Activated CD8-positive, alpha-beta T cell treated with anti-CD3 and anti-CD28 coated beads, Interleukin-2, amount 10 ng/mL, durations not matched to agents 7 days and 5 days (primary cell): ENCODE measurements at regions of chr17 and their contacts with region 1.

Region 1: DNA sequence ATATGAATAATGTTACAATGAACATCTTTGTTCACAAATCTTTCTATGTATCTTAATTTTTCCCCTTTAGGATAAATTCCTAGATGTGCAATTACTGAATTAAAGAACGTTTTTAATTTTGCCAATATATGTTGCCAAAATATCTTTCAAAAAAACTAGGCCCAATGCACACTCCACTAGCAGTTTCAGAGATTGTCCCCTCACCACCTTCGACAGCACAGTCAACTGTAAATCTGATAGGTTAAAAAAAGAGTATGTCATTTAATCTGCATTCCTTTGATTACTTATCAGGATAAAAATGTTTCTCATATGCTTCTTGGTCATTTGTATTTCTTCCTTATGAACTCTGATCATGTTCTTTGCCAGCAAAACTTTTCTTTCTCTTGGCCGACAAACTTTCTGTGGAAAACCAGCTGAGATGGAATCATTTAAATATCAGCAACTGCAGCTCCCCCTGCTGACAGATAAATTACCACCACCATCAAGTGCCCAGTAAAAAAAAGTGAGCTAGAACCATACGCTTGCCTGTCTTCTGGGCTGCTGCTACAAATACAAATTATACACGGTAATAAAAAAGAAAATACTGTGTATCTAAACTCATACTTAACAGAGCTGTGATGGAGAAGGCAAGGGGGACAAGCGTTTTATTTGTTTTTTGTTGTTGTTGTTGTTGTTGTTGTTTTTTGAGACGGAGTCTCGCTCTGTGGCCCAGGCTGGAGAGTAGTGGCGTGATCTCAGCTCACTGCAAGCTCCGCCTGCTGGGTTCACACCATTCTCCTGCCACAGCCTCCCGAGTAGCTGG is 19.6 kb upstream of the KANSL1 start:
- DNase-seq: peak; percentile 72
- ATAC-seq: peak; percentile 73
- H3K4me3 Mint-ChIP-seq: no peak overlapping the region
- H3K27ac Mint-ChIP-seq: no peak overlapping the region
- H3K4me1 Mint-ChIP-seq: peaks cover 14% of the 10 kb centered on the region
- H3K27me3 Mint-ChIP-seq: no peaks in the 10 kb centered on the region

Region 2: DNA sequence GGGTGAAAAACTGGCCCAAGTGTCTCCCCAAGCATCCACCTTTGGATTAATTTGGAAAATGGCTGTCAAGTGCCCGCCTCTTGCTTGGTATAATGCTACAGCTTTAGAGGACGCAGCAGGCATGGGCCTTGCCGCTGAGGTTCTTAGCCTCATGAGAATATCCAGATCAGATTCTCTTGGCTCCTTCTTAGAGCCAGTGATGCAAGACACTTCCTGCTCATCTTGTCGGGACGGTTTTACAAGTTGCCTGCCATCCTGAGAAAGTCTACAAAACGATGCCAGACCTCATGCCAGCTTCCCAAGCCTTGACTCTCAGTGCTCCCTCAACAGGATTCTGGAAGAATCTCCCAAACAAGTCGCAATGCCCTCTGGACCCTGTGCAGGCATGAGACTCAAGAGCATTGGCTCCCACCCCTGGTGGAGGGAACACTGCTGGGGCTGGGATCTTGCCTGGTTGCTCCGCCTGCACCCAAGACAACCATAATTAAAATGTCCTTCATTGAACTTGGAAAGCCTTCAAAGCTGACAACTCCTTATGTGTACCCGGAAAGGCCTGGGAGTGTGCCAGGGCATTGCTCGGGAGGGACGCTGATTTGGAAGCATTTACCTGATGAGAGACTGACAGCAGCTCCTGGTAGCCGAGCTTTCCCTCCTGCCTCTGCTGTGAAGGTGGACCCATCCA is 239.6 kb before region 1 on chr17:
- CTCF ChIA-PET with region 1: no interaction called
- POLR2A ChIA-PET with region 1: no interaction called
- DNase-seq: no peak
- ATAC-seq: no peak
- H3K4me3 Mint-ChIP-seq: no peak overlapping the region
- H3K27ac Mint-ChIP-seq: no peak overlapping the region
- H3K4me1 Mint-ChIP-seq: peaks cover 9% of the 10 kb centered on the region
- H3K27me3 Mint-ChIP-seq: peaks cover 5% of the 10 kb centered on the region

Region 3: DNA sequence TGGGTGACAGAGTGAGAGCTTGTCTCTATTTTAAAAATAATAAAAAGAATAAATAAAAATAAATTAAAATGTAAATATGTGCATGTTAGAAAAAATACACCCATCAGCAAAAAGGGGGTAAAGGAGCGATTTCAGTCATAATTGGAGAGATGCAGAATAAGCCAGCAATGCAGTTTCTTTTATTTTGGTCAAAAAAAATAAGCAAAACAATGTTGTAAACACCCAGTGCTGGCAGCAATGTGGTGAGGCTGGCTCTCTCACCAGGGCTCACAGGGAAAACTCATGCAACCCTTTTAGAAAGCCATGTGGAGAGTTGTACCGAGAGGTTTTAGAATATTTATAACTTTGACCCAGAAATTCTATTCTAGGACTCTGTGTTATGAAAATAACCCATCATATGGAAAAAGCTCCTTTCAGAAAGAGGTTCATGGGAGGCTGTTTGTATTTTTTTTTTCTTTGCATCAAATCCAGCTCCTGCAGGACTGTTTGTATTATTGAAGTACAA is 205.3 kb before region 1 on chr17:
- CTCF ChIA-PET with region 1: interaction called, 53 read pairs
- POLR2A ChIA-PET with region 1: no interaction called
- DNase-seq: no peak
- ATAC-seq: no peak
- H3K4me3 Mint-ChIP-seq: no peak overlapping the region
- H3K27ac Mint-ChIP-seq: no peak overlapping the region
- H3K4me1 Mint-ChIP-seq: no peaks in the 10 kb centered on the region
- H3K27me3 Mint-ChIP-seq: peaks cover 7% of the 10 kb centered on the region

Region 4: DNA sequence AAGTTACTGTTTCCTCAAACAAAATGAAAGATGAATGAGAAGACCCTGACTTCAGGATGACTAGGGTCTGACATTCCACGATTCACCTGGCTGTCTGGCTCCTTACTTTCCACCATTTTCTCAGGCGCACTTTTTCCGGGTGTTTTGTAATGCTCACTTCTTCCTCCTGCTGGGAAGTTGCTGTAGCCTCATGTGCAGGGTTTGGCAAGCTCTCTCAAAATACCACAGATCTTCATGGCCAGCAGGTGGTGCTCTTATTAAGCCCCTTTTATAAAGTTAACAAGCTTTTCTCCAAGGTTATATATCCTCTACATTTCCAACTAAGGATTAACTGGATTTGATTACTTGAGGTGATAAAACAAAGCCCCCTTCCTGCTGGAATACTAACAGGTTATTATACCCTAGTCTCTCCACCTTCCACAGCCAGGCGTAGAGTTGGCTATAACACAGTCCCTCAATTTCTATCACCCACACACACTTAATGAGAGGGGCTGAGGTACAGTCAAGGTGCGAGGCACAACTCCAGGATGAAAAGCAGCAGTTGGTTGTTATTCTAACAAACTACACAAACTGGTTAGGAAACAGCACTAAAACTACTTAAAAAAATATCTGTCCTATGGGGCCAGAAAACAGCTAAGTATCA is 168.4 kb before region 1 on chr17:
- CTCF ChIA-PET with region 1: interaction called, 39 read pairs
- POLR2A ChIA-PET with region 1: no interaction called
- DNase-seq: peak; percentile 65
- ATAC-seq: peak; percentile 57
- H3K4me3 Mint-ChIP-seq: no peak overlapping the region
- H3K27ac Mint-ChIP-seq: no peak overlapping the region
- H3K4me1 Mint-ChIP-seq: peaks cover 6% of the 10 kb centered on the region
- H3K27me3 Mint-ChIP-seq: no peaks in the 10 kb centered on the region

Region 5: GRCh38 chr17:46184696-46185095 is 28.1 kb before region 1 on chr17:
- CTCF ChIA-PET with region 1: interaction called, 30 read pairs
- POLR2A ChIA-PET with region 1: no interaction called
- DNase-seq: no peak
- ATAC-seq: no peak
- H3K4me3 Mint-ChIP-seq: no peak overlapping the region
- H3K27ac Mint-ChIP-seq: no peak overlapping the region
- H3K4me1 Mint-ChIP-seq: peaks cover 80% of the 10 kb centered on the region
- H3K27me3 Mint-ChIP-seq: no peaks in the 10 kb centered on the region

Region 6: GRCh38 chr17:46199379-46199778 is 13.5 kb before region 1 on chr17:
- CTCF ChIA-PET with region 1: interaction called, 35 read pairs
- POLR2A ChIA-PET with region 1: interaction called, 3 read pairs
- DNase-seq: no peak
- ATAC-seq: no peak
- H3K4me3 Mint-ChIP-seq: no peak overlapping the region
- H3K27ac Mint-ChIP-seq: no peak overlapping the region
- H3K4me1 Mint-ChIP-seq: peaks cover 55% of the 10 kb centered on the region
- H3K27me3 Mint-ChIP-seq: no peaks in the 10 kb centered on the region

Region 7: DNA sequence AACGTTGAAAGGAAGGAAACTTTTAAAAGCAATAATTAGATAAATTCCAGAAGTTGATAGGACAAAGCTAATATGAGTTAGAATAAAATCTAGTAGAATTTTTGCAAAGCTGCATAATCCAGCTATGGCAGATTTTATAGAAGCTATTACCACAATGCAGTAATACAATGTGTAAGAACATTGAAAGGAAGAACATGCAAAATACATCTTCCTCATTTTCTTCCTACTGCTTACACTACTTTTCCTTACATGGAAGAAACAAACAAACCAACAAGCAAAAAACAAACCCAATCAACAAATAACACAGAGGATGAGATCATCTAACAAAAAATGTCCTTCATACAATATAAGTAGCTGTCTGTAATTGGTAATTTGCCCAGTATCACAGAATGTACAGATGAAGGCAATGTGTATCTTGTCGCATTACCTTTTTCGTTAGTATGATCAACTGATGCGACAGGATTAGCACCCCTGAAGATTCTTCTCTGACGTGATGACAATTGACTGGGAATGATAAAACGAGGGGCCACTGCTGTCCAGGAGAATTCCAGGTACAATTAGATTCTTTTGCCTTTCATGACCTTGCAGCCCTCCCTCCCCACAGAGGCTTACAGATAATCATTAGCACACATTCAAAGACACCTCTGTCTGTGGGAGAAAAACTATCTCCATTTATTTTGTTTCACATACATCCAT is 60.9 kb after region 1 on chr17:
- CTCF ChIA-PET with region 1: no interaction called
- POLR2A ChIA-PET with region 1: no interaction called
- DNase-seq: no peak
- ATAC-seq: no peak
- H3K4me3 Mint-ChIP-seq: no peak overlapping the region
- H3K27ac Mint-ChIP-seq: no peak overlapping the region
- H3K4me1 Mint-ChIP-seq: no peaks in the 10 kb centered on the region
- H3K27me3 Mint-ChIP-seq: peaks cover 4% of the 10 kb centered on the region